ENCODE measurements at regions of chrX and their contacts with region 1.

Region 1: DNA sequence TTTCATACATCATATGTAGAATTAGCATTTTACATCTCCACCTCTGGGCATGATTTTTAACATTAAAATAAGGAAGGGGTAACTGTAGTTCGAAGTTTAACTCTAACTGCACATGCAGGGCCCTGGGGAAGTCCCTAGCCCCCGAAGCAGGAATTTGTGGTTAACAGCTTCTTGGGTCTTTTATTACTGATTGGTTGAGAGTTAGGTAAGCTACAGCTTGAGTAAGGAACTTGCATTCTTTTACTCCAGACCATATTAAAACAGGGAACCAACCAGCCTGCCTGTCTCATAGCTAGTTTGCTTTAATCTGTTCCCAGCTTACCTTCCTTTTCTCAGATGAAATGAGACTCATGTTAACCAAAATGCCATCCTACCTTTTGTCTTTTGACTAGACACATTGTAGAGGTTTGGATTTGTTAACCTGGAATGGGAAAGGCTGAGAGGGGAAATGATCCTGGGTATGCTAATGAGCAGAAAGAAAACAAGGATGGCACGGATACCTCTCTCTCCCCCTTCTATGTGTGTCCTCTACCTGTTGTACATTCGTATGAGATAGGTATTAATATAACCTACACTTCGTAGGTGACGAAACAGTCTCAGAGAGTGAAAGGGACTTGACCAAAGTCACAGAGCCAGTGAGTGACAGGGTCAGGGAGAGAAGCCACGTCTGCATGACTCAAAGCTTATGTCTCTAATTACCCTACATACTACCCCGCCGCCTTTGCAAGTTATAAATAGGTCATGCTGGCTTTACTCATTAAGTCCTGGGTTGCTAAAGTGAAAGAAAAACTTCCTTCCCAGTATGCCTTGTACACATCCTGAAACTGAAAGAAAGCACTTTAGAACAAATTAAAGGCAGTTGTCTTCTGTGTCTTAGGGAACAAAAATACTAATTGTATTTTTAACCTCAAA is 119.5 kb upstream of the AFF2 start:
- DNase-seq: peak; percentile 77
- ATAC-seq: peak; percentile 93
- H3K4me3 Mint-ChIP-seq: peak overlapping the region; percentile 73
- H3K27ac Mint-ChIP-seq: peak overlapping the region; percentile 94
- H3K4me1 Mint-ChIP-seq: peaks cover 22% of the 10 kb centered on the region
- H3K27me3 Mint-ChIP-seq: no peaks in the 10 kb centered on the region
- CTCF ChIP-seq: no peak

Region 2: DNA sequence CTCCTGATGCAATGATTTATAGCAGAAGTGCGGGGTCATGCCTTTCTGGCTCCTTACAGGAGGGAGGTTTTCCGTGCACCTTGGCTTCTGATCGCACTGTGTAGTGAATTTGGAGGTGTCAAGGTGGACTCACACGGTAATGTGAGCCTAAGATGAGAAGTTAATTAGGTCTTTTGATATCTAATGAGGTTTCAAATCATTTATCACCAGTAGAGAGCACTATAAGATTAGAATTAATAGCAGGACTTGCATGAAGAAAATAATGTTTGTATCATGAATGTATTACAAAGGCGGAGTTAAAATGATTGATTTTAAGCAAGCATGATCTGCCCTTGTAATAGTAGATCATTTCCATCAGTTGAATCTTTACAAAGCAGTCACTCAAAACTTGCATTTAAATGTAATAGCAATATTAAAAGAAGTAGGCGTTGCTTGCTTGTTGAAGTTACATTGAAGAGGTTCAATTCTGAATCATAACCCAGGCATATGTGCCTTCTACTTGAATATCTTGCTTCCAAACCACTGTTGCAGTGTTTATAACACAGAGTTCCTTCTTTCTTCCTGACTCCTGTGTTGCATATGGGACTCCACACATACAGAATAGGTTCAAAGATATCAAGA is 247.7 kb before region 1 on chrX:
- CTCF ChIA-PET with region 1: no interaction called
- POLR2A ChIA-PET with region 1: no interaction called
- intact Hi-C with region 1: loop called (anchors 10 kb)
- DNase-seq: no peak
- ATAC-seq: no peak
- H3K4me3 Mint-ChIP-seq: no peak overlapping the region
- H3K27ac Mint-ChIP-seq: no peak overlapping the region
- H3K4me1 Mint-ChIP-seq: no peaks in the 10 kb centered on the region
- H3K27me3 Mint-ChIP-seq: no peaks in the 10 kb centered on the region
- CTCF ChIP-seq: peak; percentile 21

Region 3: DNA sequence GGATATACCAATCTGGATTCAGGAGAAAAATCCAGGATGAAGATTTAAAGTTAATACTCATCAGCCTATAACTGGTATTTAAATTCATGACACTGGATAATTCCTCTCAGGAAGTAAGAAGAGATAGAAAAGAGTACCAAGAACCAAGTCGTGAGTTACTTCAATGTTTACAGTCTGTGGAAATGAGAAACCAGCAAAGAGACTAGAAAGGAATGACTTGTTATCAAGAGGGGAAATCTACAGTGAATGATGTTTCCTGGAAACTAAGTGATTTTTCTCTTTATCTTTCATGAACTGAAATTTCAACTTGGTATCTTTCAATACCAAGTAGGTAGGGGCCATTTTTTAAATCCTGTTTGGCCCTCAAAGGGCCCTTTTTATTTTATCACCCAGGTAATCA is 98.4 kb before region 1 on chrX:
- CTCF ChIA-PET with region 1: no interaction called
- POLR2A ChIA-PET with region 1: no interaction called
- intact Hi-C with region 1: loop called (anchors 10 kb)
- DNase-seq: no peak
- ATAC-seq: peak; percentile 62
- H3K4me3 Mint-ChIP-seq: no peak overlapping the region
- H3K27ac Mint-ChIP-seq: peak overlapping the region; percentile 92
- H3K4me1 Mint-ChIP-seq: peaks cover 31% of the 10 kb centered on the region
- H3K27me3 Mint-ChIP-seq: no peaks in the 10 kb centered on the region
- CTCF ChIP-seq: no peak

Region 4: GRCh38 chrX:148322906-148323305 is 58.0 kb before region 1 on chrX:
- CTCF ChIA-PET with region 1: no interaction called
- POLR2A ChIA-PET with region 1: no interaction called
- intact Hi-C with region 1: no loop called
- DNase-seq: no peak
- ATAC-seq: no peak
- H3K4me3 Mint-ChIP-seq: no peak overlapping the region
- H3K27ac Mint-ChIP-seq: no peak overlapping the region
- H3K4me1 Mint-ChIP-seq: no peaks in the 10 kb centered on the region
- H3K27me3 Mint-ChIP-seq: no peaks in the 10 kb centered on the region
- CTCF ChIP-seq: no peak

Region 5: GRCh38 chrX:148417934-148418333 is 37.0 kb after region 1 on chrX:
- CTCF ChIA-PET with region 1: no interaction called
- POLR2A ChIA-PET with region 1: no interaction called
- intact Hi-C with region 1: no loop called
- DNase-seq: no peak
- ATAC-seq: no peak
- H3K4me3 Mint-ChIP-seq: no peak overlapping the region
- H3K27ac Mint-ChIP-seq: no peak overlapping the region
- H3K4me1 Mint-ChIP-seq: peaks cover 3% of the 10 kb centered on the region
- H3K27me3 Mint-ChIP-seq: no peaks in the 10 kb centered on the region
- CTCF ChIP-seq: no peak

Region 6: GRCh38 chrX:148466292-148466691 is 85.4 kb after region 1 on chrX:
- CTCF ChIA-PET with region 1: no interaction called
- POLR2A ChIA-PET with region 1: no interaction called
- intact Hi-C with region 1: loop called (anchors 5 kb)
- DNase-seq: no peak
- ATAC-seq: peak; percentile 80
- H3K4me3 Mint-ChIP-seq: no peak overlapping the region
- H3K27ac Mint-ChIP-seq: no peak overlapping the region
- H3K4me1 Mint-ChIP-seq: peaks cover 15% of the 10 kb centered on the region
- H3K27me3 Mint-ChIP-seq: no peaks in the 10 kb centered on the region
- CTCF ChIP-seq: no peak

Region 7: DNA sequence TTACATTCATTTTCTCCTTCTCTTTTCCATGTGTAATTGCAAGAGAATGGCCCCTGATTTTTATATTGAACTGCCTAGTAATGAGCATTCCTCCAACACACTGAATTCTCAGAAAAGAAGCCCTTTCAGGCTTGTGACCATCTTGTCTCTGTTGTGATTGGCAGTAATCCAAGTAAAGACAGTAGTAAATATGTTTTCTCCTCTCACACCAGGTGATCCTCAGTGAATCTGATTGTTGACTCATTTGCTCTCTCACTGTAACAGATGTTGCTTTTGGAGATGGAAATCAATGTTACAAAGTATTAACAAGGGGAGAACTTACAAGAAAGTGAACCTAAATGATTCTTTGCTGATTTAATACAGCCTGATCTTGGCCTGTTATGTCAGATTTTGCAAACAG is 390.5 kb after region 1 on chrX:
- CTCF ChIA-PET with region 1: no interaction called
- POLR2A ChIA-PET with region 1: no interaction called
- intact Hi-C with region 1: no loop called
- DNase-seq: no peak
- ATAC-seq: no peak
- H3K4me3 Mint-ChIP-seq: no peak overlapping the region
- H3K27ac Mint-ChIP-seq: no peak overlapping the region
- H3K4me1 Mint-ChIP-seq: no peaks in the 10 kb centered on the region
- H3K27me3 Mint-ChIP-seq: no peaks in the 10 kb centered on the region
- CTCF ChIP-seq: no peak